Calu3 (cell line): ENCODE measurements at regions of chr11 and their contacts with region 1.

Region 1: DNA sequence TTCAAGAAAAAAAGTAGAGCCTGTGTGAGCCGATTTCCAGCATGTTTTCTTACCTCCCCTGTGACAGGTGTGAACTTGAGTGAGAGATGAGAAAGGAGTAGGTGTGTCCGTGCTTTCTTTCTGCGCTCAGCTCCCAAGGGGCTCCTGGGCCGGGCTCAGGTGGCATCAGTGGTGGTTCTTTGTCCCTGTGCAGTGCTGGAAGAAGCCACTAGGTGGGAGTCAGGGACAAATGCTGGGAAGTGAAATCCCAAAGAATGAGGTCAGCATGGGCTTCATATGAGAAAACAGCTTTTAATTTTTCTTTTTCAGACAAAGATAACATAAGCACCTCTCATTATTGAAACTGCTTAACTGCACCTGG is 57.8 kb downstream of the PPFIBP2 start:
- DNase-seq: peak; percentile 88
- H3K4me3 Mint-ChIP-seq: no peak overlapping the region
- H3K27ac Mint-ChIP-seq: peak overlapping the region; percentile 19
- H3K4me1 Mint-ChIP-seq: peaks cover 58% of the 10 kb centered on the region
- H3K27me3 Mint-ChIP-seq: no peaks in the 10 kb centered on the region
- CTCF ChIP-seq: peak; percentile 96

Region 2: DNA sequence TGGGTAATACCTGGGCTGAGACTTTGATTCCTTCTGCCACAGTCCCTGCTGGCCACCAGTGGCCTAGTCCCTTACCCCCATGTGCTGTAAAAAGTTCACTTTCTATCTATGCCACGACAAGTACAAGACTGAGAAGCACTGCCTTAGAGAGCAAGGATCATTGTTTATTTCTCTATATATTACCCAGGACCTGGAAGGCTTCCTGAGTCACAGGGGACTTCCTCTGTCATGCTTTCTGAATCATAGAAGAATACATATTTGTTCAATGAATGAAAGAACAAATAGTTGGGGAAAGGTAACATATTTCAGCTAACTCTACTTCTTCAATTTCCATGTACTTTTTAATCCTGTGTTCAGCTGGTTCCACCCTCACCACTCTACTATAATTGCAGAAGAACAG is 325.4 kb before region 1 on chr11:
- CTCF ChIA-PET with region 1: no interaction called
- intact Hi-C with region 1: no loop called
- DNase-seq: no peak
- H3K4me3 Mint-ChIP-seq: no peak overlapping the region
- H3K27ac Mint-ChIP-seq: no peak overlapping the region
- H3K4me1 Mint-ChIP-seq: peaks cover 7% of the 10 kb centered on the region
- H3K27me3 Mint-ChIP-seq: peaks cover 20% of the 10 kb centered on the region
- CTCF ChIP-seq: no peak

Region 3: GRCh38 chr11:7612661-7613393 is 41.2 kb after region 1 on chr11:
- CTCF ChIA-PET with region 1: interaction called, 10 read pairs
- intact Hi-C with region 1: loop called (anchors 1 kb)
- DNase-seq: peak; percentile 6
- H3K4me3 Mint-ChIP-seq: peak overlapping the region; percentile 26
- H3K27ac Mint-ChIP-seq: peak overlapping the region; percentile 48
- H3K4me1 Mint-ChIP-seq: peaks cover 51% of the 10 kb centered on the region
- H3K27me3 Mint-ChIP-seq: no peaks in the 10 kb centered on the region
- CTCF ChIP-seq: no peak

Region 4: DNA sequence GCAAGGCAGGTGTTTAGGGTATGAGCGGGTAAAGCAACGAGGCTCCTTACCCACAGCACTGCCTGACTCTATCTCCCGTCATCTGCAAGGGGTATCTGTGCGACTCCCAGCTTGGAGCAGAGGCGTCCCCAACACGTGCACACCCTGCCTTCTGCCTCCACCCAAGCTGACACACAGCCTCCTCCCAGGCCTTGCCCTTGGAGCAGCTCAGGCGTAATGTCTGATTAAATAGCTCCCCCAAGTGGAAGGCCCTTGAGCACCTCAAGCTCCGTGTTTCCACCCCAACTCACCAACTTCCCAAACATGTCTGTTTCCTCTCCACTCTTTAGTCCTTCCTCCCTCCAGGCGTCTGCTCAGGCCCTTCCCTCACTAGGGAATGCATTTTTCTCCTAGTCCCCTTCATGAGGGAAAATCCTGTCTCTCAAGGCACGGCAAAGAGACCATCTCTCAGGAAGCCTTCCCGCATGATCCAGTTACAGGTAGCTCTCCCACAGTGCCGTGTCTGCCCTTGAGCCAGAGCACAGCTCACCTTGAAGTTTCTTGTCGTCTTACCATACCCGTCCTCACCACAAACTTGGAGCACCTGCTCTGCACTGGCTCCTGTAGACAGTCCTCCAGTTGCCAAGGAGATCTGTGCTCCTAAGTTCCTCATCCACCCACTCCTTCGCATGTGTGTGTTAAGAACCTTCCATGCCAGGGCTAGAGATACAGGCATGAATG is 85.8 kb after region 1 on chr11:
- CTCF ChIA-PET with region 1: interaction called, 61 read pairs
- intact Hi-C with region 1: loop called (anchors 1 kb)
- DNase-seq: peak; percentile 64
- H3K4me3 Mint-ChIP-seq: no peak overlapping the region
- H3K27ac Mint-ChIP-seq: no peak overlapping the region
- H3K4me1 Mint-ChIP-seq: no peaks in the 10 kb centered on the region
- H3K27me3 Mint-ChIP-seq: no peaks in the 10 kb centered on the region
- CTCF ChIP-seq: peak; percentile 60

Region 5: DNA sequence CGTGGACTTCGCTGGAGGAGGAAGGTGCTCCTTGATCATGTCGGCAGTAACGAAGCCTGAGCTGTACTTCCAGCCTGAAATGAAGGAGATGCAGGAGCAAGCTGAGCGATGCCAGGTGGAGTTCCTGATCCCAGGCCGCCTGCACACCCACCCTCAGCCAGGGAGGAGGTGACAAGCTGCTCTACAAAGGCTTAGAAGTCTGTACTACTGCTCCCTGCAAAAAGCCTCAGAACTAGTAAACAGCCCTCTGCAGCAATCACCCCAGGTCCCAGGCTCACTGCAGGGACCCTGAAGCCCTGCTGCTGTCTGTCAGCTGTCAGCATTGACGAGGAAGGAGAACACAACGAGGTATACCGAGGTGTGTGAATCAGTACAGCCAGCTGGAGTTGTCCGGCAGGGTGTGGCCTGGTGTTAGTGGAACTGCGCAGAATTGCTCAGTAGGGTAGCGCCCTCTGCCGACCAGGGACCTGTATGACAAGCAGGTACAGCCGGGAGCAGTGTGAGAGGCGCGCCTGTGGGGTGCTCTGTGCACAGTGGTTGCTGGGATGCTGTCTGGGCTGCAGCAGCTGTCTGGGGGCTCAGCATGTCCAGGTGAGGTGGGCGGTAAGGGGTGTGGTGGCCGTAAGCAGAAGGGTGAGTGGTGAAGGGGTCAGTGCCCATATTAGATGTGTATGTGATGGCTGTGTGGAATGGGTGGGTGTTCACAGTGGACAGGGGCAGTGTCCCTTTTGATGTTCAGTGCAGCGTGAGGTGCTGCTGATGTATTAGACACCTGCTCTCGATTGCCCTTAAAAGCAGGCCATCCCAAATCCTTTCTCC is 94.1 kb after region 1 on chr11:
- CTCF ChIA-PET with region 1: interaction called, 24 read pairs
- intact Hi-C with region 1: loop called (anchors 2 kb)
- DNase-seq: peak; percentile 92
- H3K4me3 Mint-ChIP-seq: no peak overlapping the region
- H3K27ac Mint-ChIP-seq: no peak overlapping the region
- H3K4me1 Mint-ChIP-seq: peaks cover 16% of the 10 kb centered on the region
- H3K27me3 Mint-ChIP-seq: no peaks in the 10 kb centered on the region
- CTCF ChIP-seq: peak; percentile 79